ENCODE measurements at regions of chr10 and their contacts with region 1.

Region 1: GRCh38 chr10:58282615-58283014 is 13.7 kb downstream of the CISD1 start:
- DNase-seq: peak; percentile 50
- ATAC-seq: peak; percentile 87
- H3K4me3 Mint-ChIP-seq: peak overlapping the region; percentile 6
- H3K27ac Mint-ChIP-seq: peak overlapping the region; percentile 78
- H3K4me1 Mint-ChIP-seq: peaks cover 40% of the 10 kb centered on the region
- H3K27me3 Mint-ChIP-seq: no peaks in the 10 kb centered on the region

Region 2: GRCh38 chr10:58237014-58237830 is 45.4 kb before region 1 on chr10:
- CTCF ChIA-PET with region 1: no interaction called
- POLR2A ChIA-PET with region 1: no interaction called
- intact Hi-C with region 1: loop called (anchors 1 to 5 kb)
- DNase-seq: peak; percentile 8
- ATAC-seq: peak; percentile 90
- H3K4me3 Mint-ChIP-seq: no peak overlapping the region
- H3K27ac Mint-ChIP-seq: peak overlapping the region; percentile 79
- H3K4me1 Mint-ChIP-seq: peaks cover 49% of the 10 kb centered on the region
- H3K27me3 Mint-ChIP-seq: no peaks in the 10 kb centered on the region

Region 3: GRCh38 chr10:58334817-58335305 is 52.2 kb after region 1 on chr10 and contains the start of gene UBE2D1:
- CTCF ChIA-PET with region 1: no interaction called
- POLR2A ChIA-PET with region 1: no interaction called
- intact Hi-C with region 1: loop called in 1 of 2 experiments (anchors 5 kb)
- DNase-seq: peak; percentile 92
- ATAC-seq: peak; percentile 97
- H3K4me3 Mint-ChIP-seq: peak within 1 kb of the TSS; percentile 87
- H3K27ac Mint-ChIP-seq: peak within 1 kb of the TSS; percentile 87
- H3K4me1 Mint-ChIP-seq: peaks cover 36% of the 10 kb centered on the region
- H3K27me3 Mint-ChIP-seq: peaks cover 7% of the 10 kb centered on the region
- total RNA-seq, gene UBE2D1: 12.7 to 15.3 TPM